H1 (cell line): ENCODE measurements at regions of chr1 and their contacts with region 1.

Region 1: DNA sequence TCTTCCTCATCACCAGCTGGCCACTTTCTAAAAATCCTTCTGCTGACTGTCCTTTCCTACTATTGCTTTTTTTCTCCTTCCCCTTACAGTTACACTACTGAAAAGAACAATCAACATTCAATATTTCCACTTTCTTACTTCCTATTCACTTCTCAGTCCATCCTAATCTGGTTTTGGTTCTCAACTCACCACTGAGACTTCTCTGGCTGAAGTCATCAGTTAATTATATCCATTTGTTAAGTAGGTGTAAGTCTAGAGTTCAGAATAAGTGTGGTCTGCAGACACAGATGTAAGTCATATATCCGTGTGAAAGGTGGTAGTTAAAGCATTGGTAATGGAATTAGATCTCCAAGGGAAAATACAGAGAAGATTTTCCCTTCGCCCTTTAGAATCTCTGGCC is 21.4 kb downstream of the PEA15 start:
- DNase-seq: no peak
- H3K4me3 ChIP-seq: no peak overlapping the region
- H3K27ac ChIP-seq: no peak overlapping the region
- H3K4me1 ChIP-seq: no peaks in the 10 kb centered on the region
- H3K27me3 ChIP-seq: no peaks in the 10 kb centered on the region
- CTCF ChIP-seq: no peak
- EP300 ChIP-seq: no peak
- POLR2A ChIP-seq: no peak
- RAD21 ChIP-seq: no peak

Region 2: DNA sequence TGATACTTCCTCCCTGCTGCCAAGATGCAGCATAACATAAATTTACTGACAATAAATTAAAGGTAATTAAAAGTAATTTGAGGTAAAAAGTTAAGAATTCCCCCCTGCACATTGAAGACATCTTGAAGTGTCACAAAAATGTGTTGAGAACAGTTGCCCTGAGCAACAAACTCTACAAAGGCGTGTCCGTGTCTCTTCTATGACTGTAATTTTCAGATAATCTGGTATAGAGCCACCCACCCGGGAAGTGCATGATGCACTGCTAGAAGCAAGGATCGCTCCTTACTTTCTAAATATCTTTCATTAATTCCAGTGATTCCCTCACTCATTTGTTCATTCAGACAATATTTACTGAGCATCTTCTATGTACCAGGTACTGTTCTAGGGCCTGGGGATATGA is 47.3 kb before region 1 on chr1:
- CTCF ChIA-PET with region 1: no interaction called
- POLR2A ChIA-PET with region 1: no interaction called
- DNase-seq: no peak
- H3K4me3 ChIP-seq: no peak overlapping the region
- H3K27ac ChIP-seq: no peak overlapping the region
- H3K4me1 ChIP-seq: peaks cover 0 to 6% (median 0%) of the 10 kb centered on the region in 4 experiments; a peak in 2 of 7 replicates
- H3K27me3 ChIP-seq: no peaks in the 10 kb centered on the region
- CTCF ChIP-seq: no peak
- EP300 ChIP-seq: no peak
- POLR2A ChIP-seq: no peak
- RAD21 ChIP-seq: no peak

Region 3: GRCh38 chr1:160205242-160206035 is 21.2 kb before region 1 on chr1 and contains the start of gene PEA15:
- CTCF ChIA-PET with region 1: interaction called, 105 read pairs
- POLR2A ChIA-PET with region 1: interaction called, 44 read pairs
- DNase-seq: peak in 1 of 2 experiments; percentile 82
- H3K4me3 ChIP-seq: peak within 1 kb of the TSS; percentile 70 to 99 (median 86)
- H3K27ac ChIP-seq: peak within 1 kb of the TSS; percentile 75; the same call in 1 of the 2 replicates
- H3K4me1 ChIP-seq: peaks cover 13 to 35% (median 20%) of the 10 kb centered on the region in 4 experiments
- H3K27me3 ChIP-seq: no peaks in the 10 kb centered on the region
- CTCF ChIP-seq: no peak
- EP300 ChIP-seq: no peak
- POLR2A ChIP-seq: peak in 1 of 2 experiments; percentile 48; a peak in 2 of 3 replicates
- RAD21 ChIP-seq: no peak
- total RNA-seq, gene PEA15: 75.1 and 78.8 TPM in 2 replicates

Region 4: GRCh38 chr1:160211046-160211790 is 15.4 kb before region 1 on chr1:
- CTCF ChIA-PET with region 1: interaction called, 105 read pairs
- POLR2A ChIA-PET with region 1: interaction called, 44 read pairs
- DNase-seq: no peak
- H3K4me3 ChIP-seq: no peak overlapping the region
- H3K27ac ChIP-seq: peak overlapping the region; percentile 27; the same call in 1 of the 2 replicates
- H3K4me1 ChIP-seq: peaks cover 13 to 28% (median 16%) of the 10 kb centered on the region in 4 experiments
- H3K27me3 ChIP-seq: no peaks in the 10 kb centered on the region
- CTCF ChIP-seq: no peak
- EP300 ChIP-seq: no peak
- POLR2A ChIP-seq: no peak
- RAD21 ChIP-seq: no peak

Region 5: DNA sequence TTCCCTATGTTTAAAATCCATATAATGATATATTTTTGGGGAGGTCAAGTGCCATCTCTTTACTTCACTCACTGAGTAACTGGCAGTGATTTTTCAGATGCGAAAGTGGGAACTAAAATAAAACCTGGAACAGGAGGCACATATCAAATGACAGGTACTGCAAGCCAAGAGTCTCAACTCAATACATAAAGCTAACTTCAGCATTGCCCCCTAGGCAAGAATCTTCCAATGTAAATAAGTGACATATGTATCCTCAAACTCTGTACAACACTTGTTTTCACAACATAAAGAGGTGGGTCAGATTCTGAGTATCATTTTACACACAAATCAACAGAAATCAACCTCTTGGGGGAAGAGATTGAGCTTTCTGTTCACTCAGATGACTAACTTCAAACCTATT is 17.6 kb after region 1 on chr1:
- CTCF ChIA-PET with region 1: interaction called, 10 read pairs
- POLR2A ChIA-PET with region 1: interaction called, 4 read pairs
- DNase-seq: no peak
- H3K4me3 ChIP-seq: no peak overlapping the region
- H3K27ac ChIP-seq: no peak overlapping the region
- H3K4me1 ChIP-seq: no peaks in the 10 kb centered on the region
- H3K27me3 ChIP-seq: no peaks in the 10 kb centered on the region
- CTCF ChIP-seq: no peak
- EP300 ChIP-seq: no peak
- POLR2A ChIP-seq: no peak
- RAD21 ChIP-seq: no peak

Region 6: GRCh38 chr1:160284782-160285344 is 58.2 kb after region 1 on chr1 and contains the start of gene PEX19:
- CTCF ChIA-PET with region 1: no interaction called
- POLR2A ChIA-PET with region 1: no interaction called
- DNase-seq: peak; percentile 86 to 95
- H3K4me3 ChIP-seq: peak within 1 kb of the TSS; percentile 87 to 98 (median 90)
- H3K27ac ChIP-seq: peak within 1 kb of the TSS; percentile 81
- H3K4me1 ChIP-seq: peaks cover 5 to 6% (median 5%) of the 10 kb centered on the region in 4 experiments; a peak in 6 of 7 replicates
- H3K27me3 ChIP-seq: no peaks in the 10 kb centered on the region
- CTCF ChIP-seq: no peak
- EP300 ChIP-seq: no peak
- POLR2A ChIP-seq: peak; percentile 87 to 91
- RAD21 ChIP-seq: no peak
- total RNA-seq, gene PEX19: 80.2 TPM in 2 replicates